ENCODE measurements at regions of chr19 and their contacts with region 1.

Region 1: DNA sequence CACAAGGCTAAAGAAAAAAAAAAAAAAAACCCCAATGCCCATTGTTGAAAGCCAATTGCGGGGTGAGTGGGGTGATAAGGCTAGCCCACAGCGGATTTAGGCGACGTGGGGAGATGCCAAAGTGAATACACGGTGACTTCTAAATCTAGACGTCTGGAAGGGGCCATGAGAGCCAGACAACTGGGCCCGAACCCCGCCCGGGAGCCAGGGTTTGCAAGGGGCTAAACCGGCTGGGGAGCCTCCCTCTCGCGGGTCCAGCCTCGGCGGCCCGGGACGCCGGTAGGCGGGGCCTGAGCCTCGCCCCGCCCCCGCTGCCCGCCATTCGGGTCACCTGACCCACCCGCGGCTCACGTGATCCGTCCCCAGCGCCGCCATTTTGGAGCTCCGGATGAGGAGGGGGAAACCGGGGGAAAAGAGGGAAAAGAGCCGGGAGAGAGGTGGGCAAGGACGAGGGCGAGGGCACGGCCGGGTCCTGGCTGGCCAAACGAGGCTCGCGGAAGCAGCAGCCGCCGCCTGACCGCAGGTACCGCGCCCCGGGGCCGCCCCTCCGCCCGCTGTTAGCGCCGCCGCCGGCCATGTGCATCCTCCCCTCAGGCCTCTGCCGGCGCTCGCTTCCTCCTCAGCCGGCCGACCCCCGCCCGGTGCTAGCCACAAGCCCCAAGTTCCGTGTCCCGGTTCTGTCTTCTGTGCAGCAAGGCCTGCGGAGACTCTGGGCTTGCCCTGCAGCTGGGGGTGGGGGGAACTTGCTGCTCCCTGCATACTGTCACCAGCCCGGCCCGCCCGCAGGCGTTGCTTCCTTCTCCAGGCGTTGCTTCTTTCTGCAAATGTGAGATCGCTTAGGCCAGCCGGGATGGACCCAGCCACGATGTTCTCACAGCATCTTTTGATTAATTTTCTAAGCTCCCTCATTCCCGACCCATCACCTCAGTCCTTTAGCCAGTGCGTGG is at the start of gene ZNF507:
- DNase-seq: peak; percentile 90
- H3K4me3 ChIP-seq: peak within 1 kb of the TSS; percentile 78 to 93 (median 89)
- H3K27ac ChIP-seq: peak within 1 kb of the TSS; percentile 79 to 87 (median 84)
- H3K4me1 ChIP-seq: peaks cover 0 to 43% (median 36%) of the 10 kb centered on the region in 4 donors
- H3K27me3 ChIP-seq: no peaks in the 10 kb centered on the region
- CTCF ChIP-seq: peak in 1 of 4 experiments; percentile 3
- EP300 ChIP-seq: no peak
- POLR2A ChIP-seq: peak in 1 of 2 donors; percentile 11
- total RNA-seq, gene ZNF507: 19.3 to 27.1 (median 23.7) TPM

Region 2: GRCh38 chr19:32373585-32374295 is 28.2 kb after region 1 on chr19:
- intact Hi-C with region 1: loop called (anchors 2 kb)
- DNase-seq: no peak
- H3K4me3 ChIP-seq: no peak overlapping the region
- H3K27ac ChIP-seq: peak overlapping the region; percentile 52 to 74 (median 66)
- H3K4me1 ChIP-seq: peaks cover 0 to 22% (median 20%) of the 10 kb centered on the region in 4 donors
- H3K27me3 ChIP-seq: no peaks in the 10 kb centered on the region
- CTCF ChIP-seq: no peak
- EP300 ChIP-seq: peak in 2 of 4 donors; percentile 56 to 68
- POLR2A ChIP-seq: no peak

Region 3: DNA sequence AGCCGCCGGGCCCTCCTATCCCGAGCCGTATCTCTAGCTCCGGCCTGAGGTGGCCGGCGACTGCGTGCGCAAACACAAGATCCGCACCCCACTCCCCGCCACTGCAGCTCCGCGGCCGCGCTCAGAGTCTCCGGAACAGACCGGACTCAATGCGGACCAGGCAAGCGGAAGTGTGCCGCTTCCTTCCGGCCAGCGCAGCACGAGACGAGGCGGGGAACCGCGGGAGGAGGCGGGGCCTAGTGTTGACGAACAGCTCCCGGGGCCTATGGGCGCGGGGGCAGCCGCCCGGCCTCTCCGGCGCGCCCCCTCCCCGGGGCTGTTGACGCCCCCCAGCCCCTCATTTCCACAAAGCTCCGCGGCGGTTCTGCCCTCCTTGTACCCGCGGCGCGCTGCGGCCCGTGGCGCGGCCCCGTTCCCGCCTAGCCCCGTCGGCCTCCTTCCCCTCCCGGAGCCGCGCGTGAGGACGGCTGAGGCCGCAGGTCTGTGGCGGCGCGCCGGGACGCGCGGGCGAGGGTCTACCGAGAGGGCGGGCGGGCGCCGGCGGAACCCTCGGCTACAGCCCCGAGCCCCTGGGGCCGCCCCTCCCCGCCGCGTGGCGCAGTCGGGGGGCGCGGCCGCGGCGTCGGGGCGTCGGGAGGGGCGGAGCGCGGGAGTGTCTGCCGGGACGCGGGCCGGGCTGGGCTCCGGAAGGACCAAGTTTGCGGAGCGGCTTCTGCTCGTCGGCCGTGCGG is 60.1 kb after region 1 on chr19 and contains the start of gene DPY19L3:
- intact Hi-C with region 1: loop called (anchors 5 kb)
- DNase-seq: peak; percentile 98
- H3K4me3 ChIP-seq: peak within 1 kb of the TSS; percentile 71 to 97 (median 84)
- H3K27ac ChIP-seq: peak within 1 kb of the TSS; percentile 96 to 100 (median 98)
- H3K4me1 ChIP-seq: peaks cover 0 to 23% (median 15%) of the 10 kb centered on the region in 4 donors
- H3K27me3 ChIP-seq: no peaks in the 10 kb centered on the region
- CTCF ChIP-seq: no peak
- EP300 ChIP-seq: peak in 1 of 4 donors; percentile 15
- POLR2A ChIP-seq: peak; percentile 86 to 89
- total RNA-seq, gene DPY19L3: 11.4 to 33.5 (median 25.0) TPM

Region 4: DNA sequence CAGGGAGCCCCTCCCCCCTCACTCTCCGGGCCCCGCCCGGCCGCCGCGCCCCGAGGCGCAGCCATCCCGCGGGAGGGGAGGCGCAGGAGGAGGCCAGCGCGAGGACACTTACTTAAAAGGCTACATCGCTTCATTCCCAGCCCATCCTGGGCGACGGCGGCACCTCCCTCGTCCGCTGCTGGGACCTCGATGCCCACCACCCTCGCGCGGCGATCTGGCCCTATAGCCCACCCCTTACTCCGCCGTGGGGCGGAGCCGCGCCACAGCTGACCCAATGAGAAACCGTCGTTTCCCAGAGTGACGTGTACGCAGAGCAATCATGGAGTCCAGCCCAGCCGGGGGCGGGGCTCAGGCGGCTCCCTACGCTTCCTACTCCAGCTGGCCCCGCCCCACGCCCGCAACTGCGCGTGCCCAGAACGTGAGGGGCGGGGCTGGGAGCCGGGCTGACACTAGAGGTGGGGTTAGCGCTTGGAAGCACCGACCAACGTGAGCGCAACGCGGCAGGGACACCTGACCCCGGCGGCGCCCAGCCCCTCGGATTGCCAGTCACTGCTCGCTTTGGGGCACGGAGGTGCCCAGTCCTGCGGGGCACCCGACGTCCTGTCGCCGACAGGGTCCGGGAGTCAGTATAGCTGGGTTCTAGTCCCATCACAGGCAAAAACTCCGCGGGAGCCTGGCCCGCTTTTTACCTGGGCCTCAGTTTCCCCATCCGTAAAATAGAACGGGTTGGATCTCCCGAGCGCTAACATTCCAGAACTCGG is 329.6 kb after region 1 on chr19 and contains the start of gene ANKRD27:
- intact Hi-C with region 1: loop called (anchors 5 kb)
- DNase-seq: peak; percentile 99
- H3K4me3 ChIP-seq: peak within 1 kb of the TSS; percentile 74 to 99 (median 85)
- H3K27ac ChIP-seq: peak within 1 kb of the TSS; percentile 87 to 93 (median 88)
- H3K4me1 ChIP-seq: peaks cover 0 to 40% (median 34%) of the 10 kb centered on the region in 4 donors
- H3K27me3 ChIP-seq: peaks cover 0 to 23% (median 12%) of the 10 kb centered on the region in 3 donors
- CTCF ChIP-seq: no peak
- EP300 ChIP-seq: peak in 1 of 4 donors; percentile 6
- POLR2A ChIP-seq: peak; percentile 30 to 45
- total RNA-seq, gene ANKRD27: 34.1 to 48.5 (median 40.4) TPM